AG04450 (cell line): ENCODE measurements at regions of chr16 and their contacts with region 1.

Region 1: GRCh38 chr16:48687421-48688038 is 77.5 kb upstream of the N4BP1 start:
- DNase-seq: peak; percentile 29
- H3K4me3 ChIP-seq: no peak overlapping the region
- H3K27ac ChIP-seq: no peak overlapping the region
- H3K27me3 ChIP-seq: no peaks in the 10 kb centered on the region
- CTCF ChIP-seq: peak; percentile 81

Region 2: GRCh38 chr16:48676836-48677235 is 10.7 kb before region 1 on chr16:
- CTCF ChIA-PET with region 1: interaction called, 10 read pairs
- POLR2A ChIA-PET with region 1: no interaction called
- DNase-seq: no peak
- H3K4me3 ChIP-seq: no peak overlapping the region
- H3K27ac ChIP-seq: no peak overlapping the region
- H3K27me3 ChIP-seq: no peaks in the 10 kb centered on the region
- CTCF ChIP-seq: no peak

Region 3: DNA sequence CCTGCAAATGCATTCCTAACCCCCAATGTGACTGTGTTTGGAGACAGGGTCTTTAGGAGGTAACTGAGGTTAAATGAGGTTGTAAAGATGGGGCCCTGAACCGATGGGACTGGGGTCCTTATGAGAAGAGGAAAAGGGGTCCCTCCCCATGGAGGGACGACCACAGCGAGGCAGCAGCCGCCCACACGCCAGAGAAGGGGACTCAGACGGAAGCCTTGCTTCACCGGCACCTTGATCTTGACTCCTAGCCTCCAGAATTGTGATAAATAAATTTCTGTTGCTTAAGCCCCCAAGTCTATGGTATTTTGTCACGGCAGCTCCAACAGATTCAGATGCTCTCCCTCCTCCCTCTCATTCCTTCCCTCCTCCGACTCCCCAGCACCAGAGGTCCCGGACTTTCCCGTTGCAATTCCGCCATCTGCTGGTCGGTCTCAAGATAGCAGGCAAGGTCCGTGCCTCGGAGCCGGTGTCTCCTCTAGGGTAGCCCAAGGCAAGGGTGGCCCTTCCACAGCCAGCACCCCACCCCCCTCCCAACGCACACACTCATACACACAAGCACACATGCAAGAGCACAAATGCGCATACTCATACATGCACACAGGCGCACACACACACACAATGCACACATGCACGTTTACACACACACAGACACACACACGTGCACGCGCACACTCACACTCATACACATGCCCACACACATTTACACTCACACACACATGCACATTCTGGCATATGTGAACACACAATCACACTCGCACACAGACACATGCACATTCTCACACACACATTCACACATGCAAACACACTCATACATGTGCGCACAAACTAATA is 663.0 kb after region 1 on chr16:
- CTCF ChIA-PET with region 1: interaction called, 70 read pairs
- POLR2A ChIA-PET with region 1: interaction called, 3 read pairs
- DNase-seq: no peak
- H3K4me3 ChIP-seq: no peak overlapping the region
- H3K27ac ChIP-seq: no peak overlapping the region
- H3K27me3 ChIP-seq: no peaks in the 10 kb centered on the region
- CTCF ChIP-seq: peak; percentile 79